Activated T-helper 1 cell treated with anti-CD3 and anti-CD28 coated beads, Interleukin-12 subunit alpha, Interleukin-12 subunit beta, Interleukin-2, Interleukin-4 antibody, amounts not matched to agents 30 ng/mL and 10 ng/mL and 1 ng/mL, durations not matched to agents 14 hours and 24 hours and 36 hours (primary cell): ENCODE measurements at regions of chr6 and their contacts with region 1.

Region 1: DNA sequence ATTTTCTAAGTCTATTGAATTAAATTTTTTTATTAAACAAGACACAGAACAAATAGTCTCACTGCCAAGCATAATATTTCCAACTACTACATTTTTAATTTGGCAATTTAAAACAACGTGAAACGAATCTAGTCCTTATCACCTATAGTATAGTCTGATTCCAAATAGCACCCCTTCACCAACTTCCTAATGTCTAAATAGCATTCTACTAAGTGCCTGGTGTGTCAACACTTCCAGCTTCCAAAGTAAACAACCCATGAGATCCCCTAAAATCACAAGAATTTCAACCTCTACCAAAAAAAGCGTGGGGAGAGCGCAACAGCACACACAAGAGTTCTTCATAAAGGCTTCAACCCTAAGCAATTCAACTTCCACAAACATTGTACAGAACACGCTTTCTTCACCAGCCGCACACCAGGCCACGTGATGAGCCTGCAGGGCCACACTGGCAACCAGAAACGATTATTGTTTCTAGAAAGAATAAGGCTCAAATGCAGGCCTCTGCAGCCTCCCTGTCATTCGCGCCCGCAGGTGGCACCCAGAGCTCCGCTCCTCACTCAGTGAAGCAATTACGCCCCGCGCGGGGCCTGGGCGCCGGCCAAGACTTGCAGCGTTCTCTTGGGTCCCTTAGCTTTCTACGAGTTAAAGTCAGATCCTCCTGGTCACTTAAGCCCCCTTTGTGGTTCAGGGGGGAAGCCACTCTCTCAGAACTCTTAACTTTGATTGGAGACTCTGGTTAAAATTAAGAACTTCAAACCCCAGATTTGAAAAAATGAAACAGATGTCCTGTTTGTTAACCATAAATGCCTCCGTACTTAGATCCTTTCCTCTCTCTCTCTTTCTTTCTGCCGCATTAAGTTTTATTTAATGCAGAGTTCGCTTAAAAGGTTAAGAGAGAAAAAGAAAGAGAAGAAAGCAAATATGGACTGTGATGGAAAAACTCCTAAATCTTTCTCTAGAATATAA is 18.3 kb downstream of the SIM1 start:
- DNase-seq: no peak
- H3K4me3 Mint-ChIP-seq: no peak overlapping the region
- H3K27ac Mint-ChIP-seq: peak overlapping the region; percentile 55
- H3K4me1 Mint-ChIP-seq: peaks cover 11% of the 10 kb centered on the region
- H3K27me3 Mint-ChIP-seq: peaks cover 59% of the 10 kb centered on the region

Region 2: DNA sequence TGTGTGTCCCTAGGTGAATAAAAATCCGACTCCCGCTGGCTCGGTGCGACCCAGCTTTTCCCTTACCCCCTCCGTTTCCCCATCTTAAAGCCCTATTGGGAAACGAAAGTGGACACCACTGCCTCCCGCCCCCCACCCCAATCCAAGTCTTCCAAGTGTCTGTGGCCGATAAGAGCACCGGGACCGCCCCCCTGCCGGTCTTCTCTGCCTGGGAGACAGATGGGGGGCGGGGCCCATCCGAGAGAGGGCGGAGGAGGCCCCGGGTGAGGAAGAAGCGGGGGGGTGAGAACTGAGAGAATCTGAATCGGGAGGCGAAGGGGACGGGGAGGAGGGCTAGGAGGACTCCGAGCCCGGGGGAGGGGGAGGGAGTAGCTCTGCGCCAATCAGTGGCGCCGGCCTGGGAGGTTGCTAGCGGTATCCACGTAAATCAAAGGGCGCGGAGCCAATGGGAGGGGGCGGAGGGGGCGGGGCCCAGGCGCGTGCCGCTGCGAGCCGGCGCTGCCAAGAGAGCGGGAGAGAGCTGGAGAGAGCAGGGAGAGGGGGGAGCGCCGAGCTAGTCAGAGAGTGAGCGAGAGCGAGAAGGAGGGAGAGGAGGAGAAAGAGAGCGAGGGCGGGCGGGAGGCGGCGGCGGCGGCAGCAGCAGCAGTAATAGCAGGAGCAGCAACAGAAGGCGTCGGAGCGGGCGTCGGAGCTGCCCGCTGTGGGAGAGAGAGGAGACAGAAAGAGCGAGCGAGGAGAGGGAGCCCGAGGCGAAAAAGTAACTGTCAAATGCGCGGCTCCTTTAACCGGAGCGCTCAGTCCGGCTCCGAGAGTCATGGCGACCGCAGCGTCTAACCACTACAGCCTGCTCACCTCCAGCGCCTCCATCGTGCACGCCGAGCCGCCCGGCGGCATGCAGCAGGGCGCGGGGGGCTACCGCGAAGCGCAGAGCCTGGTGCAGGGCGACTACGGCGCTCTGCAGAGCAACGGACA is 1612.1 kb before region 1 on chr6 and contains the start of gene POU3F2:
- intact Hi-C with region 1: loop called (anchors 5 kb)
- DNase-seq: peak; percentile 33
- H3K4me3 Mint-ChIP-seq: peak within 1 kb of the TSS; percentile 84
- H3K27ac Mint-ChIP-seq: peak within 1 kb of the TSS; percentile 87
- H3K4me1 Mint-ChIP-seq: peaks cover 17% of the 10 kb centered on the region
- H3K27me3 Mint-ChIP-seq: peaks cover 81% of the 10 kb centered on the region
- total RNA-seq, gene POU3F2: not detected in 2 replicates

Region 3: DNA sequence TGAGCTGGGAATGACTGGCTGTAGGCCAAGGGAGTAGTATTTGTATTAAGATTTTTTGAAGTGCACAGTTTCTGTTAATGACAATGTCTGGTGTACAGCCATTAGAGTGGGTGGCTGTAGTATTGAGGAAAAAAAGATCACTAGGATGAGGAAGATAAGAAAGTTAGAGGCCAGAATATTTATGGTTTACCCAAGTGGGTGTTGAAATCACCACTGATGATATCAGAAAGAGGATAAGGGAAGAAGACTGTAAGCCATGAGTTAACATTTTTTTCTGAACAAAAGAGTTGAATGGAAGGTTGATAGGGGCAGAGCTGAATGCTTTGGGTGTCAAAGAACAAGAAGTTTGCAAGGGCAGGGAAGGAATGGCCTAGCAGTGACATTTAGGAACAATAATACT is 735.1 kb before region 1 on chr6:
- intact Hi-C with region 1: no loop called
- DNase-seq: no peak
- H3K4me3 Mint-ChIP-seq: no peak overlapping the region
- H3K27ac Mint-ChIP-seq: no peak overlapping the region
- H3K4me1 Mint-ChIP-seq: no peaks in the 10 kb centered on the region
- H3K27me3 Mint-ChIP-seq: peaks cover 8% of the 10 kb centered on the region

Region 4: GRCh38 chr6:100144991-100145390 is 301.4 kb before region 1 on chr6:
- intact Hi-C with region 1: no loop called
- DNase-seq: no peak
- H3K4me3 Mint-ChIP-seq: no peak overlapping the region
- H3K27ac Mint-ChIP-seq: no peak overlapping the region
- H3K4me1 Mint-ChIP-seq: no peaks in the 10 kb centered on the region
- H3K27me3 Mint-ChIP-seq: peaks cover 11% of the 10 kb centered on the region

Region 5: GRCh38 chr6:100464903-100465700 is 18.7 kb after region 1 on chr6 and contains the start of gene SIM1:
- intact Hi-C with region 1: loop called (anchors 1 kb)
- DNase-seq: no peak
- H3K4me3 Mint-ChIP-seq: no peak within 1 kb of the TSS
- H3K27ac Mint-ChIP-seq: peak within 1 kb of the TSS; percentile 67
- H3K4me1 Mint-ChIP-seq: peaks cover 12% of the 10 kb centered on the region
- H3K27me3 Mint-ChIP-seq: peaks cover 84% of the 10 kb centered on the region
- total RNA-seq, gene SIM1: 0.02 and 0.13 TPM in 2 replicates

Region 6: GRCh38 chr6:100968943-100969342 is 522.5 kb after region 1 on chr6:
- intact Hi-C with region 1: no loop called
- DNase-seq: no peak
- H3K4me3 Mint-ChIP-seq: no peak overlapping the region
- H3K27ac Mint-ChIP-seq: no peak overlapping the region
- H3K4me1 Mint-ChIP-seq: no peaks in the 10 kb centered on the region
- H3K27me3 Mint-ChIP-seq: no peaks in the 10 kb centered on the region

Region 7: GRCh38 chr6:101396548-101397173 is 950.3 kb after region 1 on chr6:
- intact Hi-C with region 1: loop called (anchors 5 kb)
- DNase-seq: peak; percentile 19
- H3K4me3 Mint-ChIP-seq: no peak overlapping the region
- H3K27ac Mint-ChIP-seq: no peak overlapping the region
- H3K4me1 Mint-ChIP-seq: no peaks in the 10 kb centered on the region
- H3K27me3 Mint-ChIP-seq: peaks cover 45% of the 10 kb centered on the region